AG04450 (cell line): ENCODE measurements at regions of chr17 and their contacts with region 1.

Region 1: GRCh38 chr17:79935197-79935885 is 96.1 kb upstream of the CBX4 start:
- DNase-seq: no peak
- H3K4me3 ChIP-seq: no peak overlapping the region
- H3K27ac ChIP-seq: no peak overlapping the region
- H3K27me3 ChIP-seq: peaks cover 13% of the 10 kb centered on the region
- CTCF ChIP-seq: no peak

Region 2: DNA sequence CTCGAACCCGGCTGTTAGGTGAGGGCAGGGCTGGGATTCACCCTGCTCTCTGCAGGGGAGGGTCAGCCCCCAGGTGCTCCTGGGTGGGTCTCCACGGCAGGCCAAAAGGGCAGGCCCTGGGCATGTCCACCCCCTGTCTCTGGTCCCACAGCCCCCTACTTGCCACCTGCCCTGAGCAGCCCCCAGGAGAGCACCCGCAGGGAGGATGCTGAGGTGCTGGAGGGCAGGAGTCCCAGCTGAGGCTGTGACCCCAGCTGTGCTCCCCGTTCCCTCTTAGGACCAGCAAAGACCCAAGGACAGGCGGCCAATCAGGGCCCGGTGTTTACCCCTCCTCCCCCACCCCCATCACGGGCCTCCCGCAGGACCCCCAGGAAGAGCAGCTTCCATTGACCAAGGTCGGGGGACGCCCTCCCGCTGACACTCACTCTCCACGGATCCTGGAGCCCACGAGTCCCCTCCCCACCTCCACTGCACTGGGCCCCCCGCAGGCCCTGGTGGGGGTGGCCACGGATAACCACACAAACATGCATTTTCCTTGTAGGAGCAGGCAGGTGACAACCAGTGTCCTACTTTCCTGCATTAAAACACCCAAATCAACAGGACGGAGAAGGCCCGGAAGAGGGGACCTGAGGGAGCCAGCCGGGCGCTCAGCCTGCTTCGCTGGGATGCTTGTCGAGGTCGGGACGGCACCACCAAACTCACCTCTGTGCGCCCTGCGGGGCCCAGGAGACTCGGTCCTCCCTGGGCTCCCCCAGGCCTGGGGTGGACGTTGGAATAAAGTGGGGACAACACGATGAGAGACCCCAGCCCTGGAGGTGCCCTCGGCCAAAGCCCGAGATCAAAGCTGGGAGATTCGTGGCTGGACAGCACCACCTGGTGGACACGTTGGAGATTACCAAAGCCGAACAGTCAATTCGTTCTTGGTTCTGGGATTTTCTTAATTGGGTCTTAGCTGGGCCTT is 227.1 kb before region 1 on chr17:
- CTCF ChIA-PET with region 1: no interaction called
- POLR2A ChIA-PET with region 1: interaction called, 10 read pairs
- DNase-seq: no peak
- H3K4me3 ChIP-seq: peak overlapping the region; percentile 38
- H3K27ac ChIP-seq: no peak overlapping the region
- H3K27me3 ChIP-seq: peaks cover 3% of the 10 kb centered on the region
- CTCF ChIP-seq: peak; percentile 78

Region 3: GRCh38 chr17:79810130-79811010 is 125.0 kb before region 1 on chr17:
- CTCF ChIA-PET with region 1: no interaction called
- POLR2A ChIA-PET with region 1: no interaction called
- DNase-seq: no peak
- H3K4me3 ChIP-seq: peak overlapping the region; percentile 27
- H3K27ac ChIP-seq: no peak overlapping the region
- H3K27me3 ChIP-seq: peaks cover 87% of the 10 kb centered on the region
- CTCF ChIP-seq: no peak

Region 4: GRCh38 chr17:80147035-80147836 is 211.9 kb after region 1 on chr17 and contains the start of gene EIF4A3:
- CTCF ChIA-PET with region 1: no interaction called
- POLR2A ChIA-PET with region 1: no interaction called
- DNase-seq: peak; percentile 98
- H3K4me3 ChIP-seq: peak within 1 kb of the TSS; percentile 96
- H3K27ac ChIP-seq: peak within 1 kb of the TSS; percentile 77
- H3K27me3 ChIP-seq: no peaks in the 10 kb centered on the region
- CTCF ChIP-seq: no peak
- polyA plus RNA-seq, gene EIF4A3: 96.1 and 103 TPM in 2 replicates